Stomach (tissue), 19 donors: ENCODE measurements at regions of chr16 and their contacts with region 1.

Region 1: GRCh38 chr16:19912455-19913339 is 28.0 kb upstream of the GPRC5B start:
- DNase-seq: no peak
- H3K4me3 ChIP-seq: no peak overlapping the region
- H3K27ac ChIP-seq: no peak overlapping the region
- H3K4me1 ChIP-seq: peaks cover 0 to 7% (median under 1%) of the 10 kb centered on the region in 4 donors
- H3K27me3 ChIP-seq: peaks cover 0 to 18% (median 0%) of the 10 kb centered on the region in 3 donors
- CTCF ChIP-seq: no peak
- EP300 ChIP-seq: no peak
- POLR2A ChIP-seq: no peak

Region 2: DNA sequence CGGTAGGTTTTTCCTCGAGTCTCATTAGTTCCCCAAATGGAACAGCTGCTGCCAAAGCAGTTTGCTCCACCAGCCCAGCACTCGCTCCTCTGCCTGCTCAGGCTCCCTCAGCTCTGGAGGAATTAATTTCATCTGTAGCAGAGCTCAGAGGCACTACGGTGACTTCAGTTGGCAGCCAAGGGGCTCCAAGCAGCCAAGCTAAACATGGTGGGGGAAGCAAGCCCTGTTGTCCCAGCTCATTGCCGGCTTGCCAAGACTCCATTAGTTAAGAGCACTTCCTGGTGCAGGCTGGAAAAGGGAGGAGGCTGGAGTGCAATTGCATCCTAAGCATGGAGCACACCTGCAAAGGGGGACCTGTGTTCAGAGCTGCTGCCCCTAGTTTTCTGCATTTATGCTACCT is 50.6 kb after region 1 on chr16:
- intact Hi-C with region 1: no loop called
- DNase-seq: peak; percentile 20 to 84
- H3K4me3 ChIP-seq: no peak overlapping the region
- H3K27ac ChIP-seq: no peak overlapping the region
- H3K4me1 ChIP-seq: no peaks in the 10 kb centered on the region
- H3K27me3 ChIP-seq: no peaks in the 10 kb centered on the region
- CTCF ChIP-seq: no peak
- EP300 ChIP-seq: no peak
- POLR2A ChIP-seq: no peak

Region 3: GRCh38 chr16:20377181-20377580 is 464.5 kb after region 1 on chr16:
- intact Hi-C with region 1: loop called (anchors 5 kb)
- DNase-seq: no peak
- H3K4me3 ChIP-seq: no peak overlapping the region
- H3K27ac ChIP-seq: no peak overlapping the region
- H3K4me1 ChIP-seq: no peaks in the 10 kb centered on the region
- H3K27me3 ChIP-seq: no peaks in the 10 kb centered on the region
- CTCF ChIP-seq: no peak
- EP300 ChIP-seq: no peak
- POLR2A ChIP-seq: no peak

Region 4: GRCh38 chr16:21184834-21185233 is 1272.1 kb after region 1 on chr16:
- intact Hi-C with region 1: no loop called
- DNase-seq: no peak
- H3K4me3 ChIP-seq: no peak overlapping the region
- H3K27ac ChIP-seq: no peak overlapping the region
- H3K4me1 ChIP-seq: peaks cover 0 to 10% (median 7%) of the 10 kb centered on the region in 4 donors
- H3K27me3 ChIP-seq: no peaks in the 10 kb centered on the region
- CTCF ChIP-seq: no peak
- EP300 ChIP-seq: no peak
- POLR2A ChIP-seq: no peak